Cardiac septum (tissue), 1 donor: ENCODE measurements at regions of chr7 and their contacts with region 1.

Region 1: GRCh38 chr7:128425850-128426249 is 16.1 kb upstream of the IMPDH1 start:
- DNase-seq: peak; percentile 86

Region 2: DNA sequence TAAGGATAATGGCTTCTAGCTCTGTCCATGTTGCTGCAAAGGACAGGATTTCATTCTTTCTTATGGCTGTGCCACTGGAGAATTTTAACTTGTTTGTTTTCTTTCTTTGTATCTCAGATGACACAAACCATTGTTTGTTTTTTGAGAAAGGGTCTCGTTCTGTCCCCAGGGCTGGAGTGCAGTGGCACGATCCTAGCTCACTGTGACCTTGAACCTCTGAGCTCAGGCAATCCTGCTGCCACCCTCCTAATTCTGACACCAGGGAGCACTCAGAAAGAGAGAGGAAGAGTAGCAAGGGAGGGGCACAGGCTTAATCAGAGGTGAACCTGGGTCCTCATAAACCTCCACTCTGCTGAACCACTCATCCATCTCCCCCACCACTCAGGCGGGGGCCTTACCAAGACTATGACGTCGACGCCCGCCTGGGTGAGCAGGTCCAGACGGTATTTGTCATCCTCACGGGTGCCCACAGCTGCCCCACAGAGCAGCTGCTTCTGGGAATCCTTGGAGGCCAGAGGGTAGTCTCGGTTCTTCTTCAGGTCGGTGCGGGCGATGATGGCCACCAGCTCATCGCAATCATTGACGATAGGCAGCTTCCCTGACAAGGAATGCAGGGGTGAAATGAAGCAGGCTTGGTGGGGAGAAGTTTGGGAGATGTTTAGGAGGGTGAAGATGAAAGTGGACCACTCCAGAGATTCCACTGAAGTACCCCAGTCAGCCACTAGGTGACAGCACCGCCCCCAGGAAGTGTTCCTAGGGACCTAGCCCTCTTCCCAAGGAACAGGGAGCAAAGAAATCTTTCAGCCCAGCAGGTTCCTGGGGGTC is 27.6 kb before region 1 on chr7:
- intact Hi-C with region 1: loop called (anchors 2 kb)
- DNase-seq: peak; percentile 86

Region 3: DNA sequence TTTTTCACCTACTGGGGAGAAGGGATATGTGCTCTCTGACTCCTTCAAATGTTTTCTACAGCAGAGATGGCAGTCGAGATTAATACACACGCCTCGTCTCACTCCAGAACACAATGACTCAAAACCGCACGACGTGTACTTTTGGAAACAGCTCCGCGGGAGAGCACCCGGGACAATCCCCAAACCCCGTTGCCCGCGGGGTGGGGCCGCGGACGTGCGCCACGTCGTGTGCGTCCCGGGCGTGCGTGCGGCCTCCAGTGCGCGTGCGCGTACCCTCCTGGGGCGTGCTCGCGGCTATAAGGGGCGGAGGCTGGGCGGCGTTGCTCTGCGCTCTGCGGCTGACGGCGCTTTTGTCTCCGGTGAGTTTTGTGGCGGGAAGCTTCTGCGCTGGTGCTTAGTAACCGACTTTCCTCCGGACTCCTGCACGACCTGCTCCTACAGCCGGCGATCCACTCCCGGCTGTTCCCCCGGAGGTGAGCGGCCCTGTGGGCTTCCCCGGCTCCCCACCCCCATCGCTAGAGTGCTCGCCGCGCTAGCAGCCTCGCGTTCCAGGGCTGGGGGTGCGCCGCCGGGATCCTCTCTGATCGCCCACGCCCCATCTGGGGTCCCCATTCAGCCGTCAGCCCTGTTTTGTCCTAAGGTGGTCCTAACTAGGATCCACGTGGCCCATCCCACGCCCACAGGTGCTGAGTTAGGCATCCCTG is 29.9 kb after region 1 on chr7 and contains the start of gene HILPDA:
- intact Hi-C with region 1: loop called (anchors 1 kb)
- DNase-seq: peak; percentile 98
- total RNA-seq, gene HILPDA: 14.0 TPM